ENCODE measurements at regions of chr12 and their contacts with region 1.

Region 1: DNA sequence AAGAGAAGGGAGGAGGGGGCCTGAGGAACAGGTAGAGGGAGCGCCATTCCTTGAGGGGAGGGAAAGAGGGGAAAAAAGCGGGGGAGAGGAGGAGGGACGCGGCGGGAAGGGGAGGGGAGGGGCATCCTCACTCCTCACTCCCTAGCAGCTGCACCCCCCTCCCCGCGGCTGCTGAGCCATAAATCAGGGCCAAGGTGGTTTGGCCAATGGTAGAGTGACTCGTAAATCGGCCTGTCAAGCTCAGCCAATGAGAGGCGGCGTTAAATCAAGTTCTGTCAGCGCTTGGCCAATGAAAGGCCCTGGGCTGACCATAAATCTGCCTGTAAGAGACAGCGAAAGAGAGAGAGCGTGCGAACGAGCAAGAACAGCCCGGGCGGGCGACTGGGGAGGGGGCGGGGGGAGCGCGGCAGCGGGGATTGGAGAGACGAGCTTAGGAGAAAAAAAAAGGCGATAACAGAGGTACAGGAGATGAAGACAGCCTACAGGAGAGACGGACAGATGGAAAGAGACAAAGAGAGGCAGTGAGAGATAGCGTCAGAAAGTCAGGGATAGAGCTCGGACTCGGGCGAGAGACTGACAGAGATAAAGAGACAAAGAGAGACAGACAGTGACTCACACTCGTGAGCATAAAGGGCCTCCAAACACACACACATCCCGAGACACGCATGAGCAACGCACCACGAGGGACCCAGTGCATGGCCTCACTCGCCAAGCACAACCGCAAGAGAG is 5.1 kb downstream of the GPR84 start:
- DNase-seq: peak; percentile 99
- ATAC-seq: peak; percentile 93
- H3K4me3 ChIP-seq: peak overlapping the region; percentile 81
- H3K27ac ChIP-seq: peak overlapping the region; percentile 74
- H3K4me1 ChIP-seq: peaks cover 28% of the 10 kb centered on the region
- H3K27me3 ChIP-seq: no peaks in the 10 kb centered on the region
- CTCF ChIP-seq: no peak

Region 2: DNA sequence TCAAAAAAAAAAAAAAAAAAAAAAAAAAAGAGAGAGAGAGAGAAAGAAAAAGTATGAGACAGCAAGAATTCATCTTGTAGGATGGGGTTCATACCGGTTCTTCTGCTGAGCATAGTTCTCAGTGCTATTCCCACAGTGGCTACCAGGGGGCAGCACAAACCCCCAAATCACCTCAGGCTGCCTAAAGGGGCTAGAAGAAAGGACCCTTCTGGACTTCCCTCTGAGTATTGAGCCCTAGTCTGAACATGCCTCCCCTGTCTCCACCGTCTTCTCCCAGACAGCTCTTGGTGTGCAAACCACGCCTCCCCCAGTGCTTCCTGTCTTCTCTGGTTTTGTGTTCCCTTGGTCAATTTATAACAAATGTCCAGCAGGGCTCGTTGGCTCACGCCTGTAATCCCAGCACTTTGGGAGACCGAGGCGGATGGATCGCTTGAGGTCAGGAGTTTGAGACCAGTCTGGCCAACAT is 139.1 kb before region 1 on chr12:
- CTCF ChIA-PET with region 1: no interaction called
- POLR2A ChIA-PET with region 1: no interaction called
- intact Hi-C with region 1: loop called (anchors 1 kb)
- DNase-seq: peak; percentile 75
- ATAC-seq: peak; percentile 52
- H3K4me3 ChIP-seq: peak overlapping the region; percentile 62; the same call in 1 of the 2 replicates
- H3K27ac ChIP-seq: no peak overlapping the region
- H3K4me1 ChIP-seq: peaks cover 16% of the 10 kb centered on the region
- H3K27me3 ChIP-seq: no peaks in the 10 kb centered on the region
- CTCF ChIP-seq: peak; percentile 79

Region 3: DNA sequence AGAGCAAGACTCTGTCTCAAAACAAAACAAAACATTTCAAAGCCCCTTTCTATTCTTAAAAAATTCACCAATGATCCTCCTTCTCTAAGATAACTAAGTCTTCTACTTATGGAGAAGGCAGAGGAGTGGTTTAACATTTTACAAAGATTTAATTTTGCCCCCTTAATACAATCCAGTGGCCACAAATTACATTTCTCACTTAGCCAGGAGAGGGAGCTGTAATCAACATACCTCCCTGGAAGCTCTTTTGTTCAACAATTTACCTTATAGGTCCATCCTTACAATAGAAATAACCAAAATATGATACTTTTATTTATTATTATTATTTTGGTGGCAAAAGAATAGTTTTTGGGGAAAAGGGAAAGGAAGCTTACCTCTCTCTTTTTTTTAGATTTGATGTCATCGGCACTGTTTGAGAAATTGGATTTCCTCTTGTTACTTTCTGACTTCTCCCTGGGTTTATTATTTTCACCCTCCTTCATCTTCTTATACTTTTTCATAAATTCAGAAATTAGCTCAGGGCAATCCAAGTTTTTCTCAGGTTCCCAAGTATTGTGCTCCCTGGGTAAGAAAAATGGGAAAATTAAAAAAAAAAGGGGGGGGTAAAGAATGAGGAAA is 107.4 kb before region 1 on chr12:
- CTCF ChIA-PET with region 1: interaction called, 8 read pairs
- POLR2A ChIA-PET with region 1: no interaction called
- intact Hi-C with region 1: loop called (anchors 1 kb)
- DNase-seq: peak; percentile 65
- ATAC-seq: peak; percentile 57
- H3K4me3 ChIP-seq: no peak overlapping the region
- H3K27ac ChIP-seq: no peak overlapping the region
- H3K4me1 ChIP-seq: no peaks in the 10 kb centered on the region
- H3K27me3 ChIP-seq: no peaks in the 10 kb centered on the region
- CTCF ChIP-seq: peak; percentile 71

Region 4: DNA sequence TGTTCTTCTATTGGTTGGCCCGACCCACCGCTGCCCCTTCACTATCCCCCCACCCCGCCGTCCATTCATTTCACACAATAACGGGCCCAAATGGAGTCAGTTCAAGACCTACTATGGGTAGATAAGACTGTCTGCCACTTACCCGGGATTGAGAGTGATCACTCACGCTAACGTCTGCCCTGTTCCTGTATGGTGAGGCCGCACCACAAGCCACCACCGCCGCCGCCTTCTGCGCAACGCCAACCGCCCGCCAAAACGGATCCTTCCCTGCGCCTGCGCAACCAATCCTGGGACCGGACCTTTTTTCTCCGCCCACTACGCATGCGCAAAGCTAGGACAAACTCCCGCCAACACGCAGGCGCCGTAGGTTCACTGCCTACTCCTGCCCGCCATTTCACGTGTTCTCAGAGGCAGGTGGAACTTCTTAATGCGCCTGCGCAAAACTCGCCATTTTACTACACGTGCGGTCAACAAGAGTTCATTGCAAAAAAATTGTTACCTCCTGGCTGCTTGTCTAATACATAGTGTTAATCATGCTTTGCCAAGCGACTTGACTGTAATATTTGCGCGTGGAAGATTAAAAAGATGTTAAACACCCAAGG is 79.2 kb before region 1 on chr12 and contains the start of gene CBX5:
- CTCF ChIA-PET with region 1: no interaction called
- POLR2A ChIA-PET with region 1: no interaction called
- intact Hi-C with region 1: loop called (anchors 1 kb)
- DNase-seq: peak; percentile 98
- ATAC-seq: peak; percentile 40
- H3K4me3 ChIP-seq: peak within 1 kb of the TSS; percentile 88
- H3K27ac ChIP-seq: peak within 1 kb of the TSS; percentile 87
- H3K4me1 ChIP-seq: peaks cover 31% of the 10 kb centered on the region
- H3K27me3 ChIP-seq: no peaks in the 10 kb centered on the region
- CTCF ChIP-seq: no peak
- total RNA-seq, gene CBX5: 14.6 and 14.9 TPM in 2 replicates

Region 5: DNA sequence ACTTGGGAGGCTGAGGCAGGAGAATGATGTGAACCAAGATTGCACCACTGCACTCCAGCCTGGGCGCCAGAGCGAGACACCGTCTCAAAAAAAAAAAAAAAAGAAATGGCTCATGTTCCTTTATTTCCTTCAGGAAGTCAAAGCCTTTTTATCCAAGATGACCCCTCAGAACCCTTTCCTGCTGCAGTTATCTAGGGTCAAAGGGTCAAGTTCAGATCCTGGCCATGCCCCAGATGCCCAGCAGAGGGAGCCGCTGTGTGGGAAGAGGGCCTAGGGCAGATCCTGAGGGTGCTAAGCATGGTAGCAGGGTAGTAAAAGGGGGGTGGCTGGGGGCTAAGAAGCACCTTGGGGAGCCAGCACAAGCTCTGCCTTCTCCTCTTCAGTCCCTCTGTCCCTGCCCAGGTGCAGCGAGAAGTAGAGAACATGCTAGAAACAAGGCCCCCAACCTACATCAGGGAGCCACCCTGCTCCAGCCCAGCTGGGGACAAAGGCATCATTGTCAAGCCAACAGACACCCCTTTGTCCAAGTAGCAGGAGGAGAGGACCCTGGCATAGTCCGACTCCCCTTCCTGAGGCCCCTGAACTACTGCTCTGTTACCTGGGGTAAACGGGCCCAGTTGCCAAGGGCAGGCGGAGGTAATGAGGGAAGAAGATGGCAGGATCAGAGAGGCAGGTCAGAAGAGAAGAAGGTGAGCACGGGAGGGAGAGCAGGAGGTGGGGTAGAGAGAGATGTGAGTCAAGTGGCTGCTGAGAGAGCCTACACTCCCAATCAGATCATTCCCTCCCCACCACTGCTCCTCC is 64.8 kb before region 1 on chr12:
- CTCF ChIA-PET with region 1: no interaction called
- POLR2A ChIA-PET with region 1: interaction called, 6 read pairs
- intact Hi-C with region 1: loop called (anchors 2 kb)
- DNase-seq: peak; percentile 49
- ATAC-seq: peak; percentile 44
- H3K4me3 ChIP-seq: no peak overlapping the region
- H3K27ac ChIP-seq: no peak overlapping the region
- H3K4me1 ChIP-seq: no peaks in the 10 kb centered on the region
- H3K27me3 ChIP-seq: no peaks in the 10 kb centered on the region
- CTCF ChIP-seq: peak; percentile 84

Measured in PC-3 (cell line).